ENCODE measurements at regions of chr5 and their contacts with region 1.

Region 1: GRCh38 chr5:148740966-148741742 is 85.3 kb upstream of the ADRB2 start:
- DNase-seq: peak; percentile 39
- H3K4me3 ChIP-seq: no peak overlapping the region
- H3K27ac ChIP-seq: no peak overlapping the region
- H3K4me1 ChIP-seq: no peaks in the 10 kb centered on the region
- H3K27me3 ChIP-seq: no peaks in the 10 kb centered on the region
- CTCF ChIP-seq: peak; percentile 72
- EP300 ChIP-seq: no peak
- RAD21 ChIP-seq: peak; percentile 80

Region 2: DNA sequence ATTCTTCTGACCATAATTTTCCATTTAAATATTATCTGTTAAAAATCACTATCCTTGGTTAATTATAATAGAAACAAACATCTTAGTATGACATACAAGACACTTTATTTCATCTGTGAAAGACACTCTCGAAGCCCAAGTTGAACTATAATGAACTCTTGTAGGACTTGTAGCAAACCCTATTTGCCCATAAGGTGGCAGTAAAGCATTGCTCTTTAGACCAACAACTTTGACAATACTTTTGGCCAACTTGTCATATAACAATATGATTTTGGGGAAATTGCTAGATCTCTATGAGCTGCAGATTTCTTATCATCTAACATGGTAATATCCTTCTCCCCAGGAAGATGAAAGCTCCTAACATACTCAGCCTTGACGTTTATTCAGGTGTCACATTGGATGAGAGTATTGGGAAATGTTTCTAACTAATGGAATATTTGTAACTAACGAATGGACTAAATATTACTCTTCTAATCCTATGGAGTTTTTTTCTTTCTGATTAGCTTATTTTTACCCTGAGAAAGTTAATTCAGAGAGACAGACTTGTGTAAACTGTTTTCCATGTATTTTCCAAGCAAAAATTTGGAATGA is 561.8 kb before region 1 on chr5:
- CTCF ChIA-PET with region 1: interaction called, 11 read pairs
- POLR2A ChIA-PET with region 1: no interaction called
- DNase-seq: peak; percentile 12
- H3K4me3 ChIP-seq: no peak overlapping the region
- H3K27ac ChIP-seq: no peak overlapping the region
- H3K4me1 ChIP-seq: no peaks in the 10 kb centered on the region
- H3K27me3 ChIP-seq: no peaks in the 10 kb centered on the region
- CTCF ChIP-seq: peak; percentile 82
- EP300 ChIP-seq: no peak
- RAD21 ChIP-seq: peak; percentile 91

Region 3: GRCh38 chr5:148659641-148660345 is 81.4 kb before region 1 on chr5:
- CTCF ChIA-PET with region 1: no interaction called
- POLR2A ChIA-PET with region 1: no interaction called
- DNase-seq: no peak
- H3K4me3 ChIP-seq: no peak overlapping the region
- H3K27ac ChIP-seq: no peak overlapping the region
- H3K4me1 ChIP-seq: peaks cover 0 to 9% of the 10 kb centered on the region in 2 experiments; a peak in 2 of 4 replicates
- H3K27me3 ChIP-seq: peaks cover 6% of the 10 kb centered on the region; the same call in 1 of the 2 replicates
- CTCF ChIP-seq: no peak
- EP300 ChIP-seq: no peak
- RAD21 ChIP-seq: no peak

Region 4: DNA sequence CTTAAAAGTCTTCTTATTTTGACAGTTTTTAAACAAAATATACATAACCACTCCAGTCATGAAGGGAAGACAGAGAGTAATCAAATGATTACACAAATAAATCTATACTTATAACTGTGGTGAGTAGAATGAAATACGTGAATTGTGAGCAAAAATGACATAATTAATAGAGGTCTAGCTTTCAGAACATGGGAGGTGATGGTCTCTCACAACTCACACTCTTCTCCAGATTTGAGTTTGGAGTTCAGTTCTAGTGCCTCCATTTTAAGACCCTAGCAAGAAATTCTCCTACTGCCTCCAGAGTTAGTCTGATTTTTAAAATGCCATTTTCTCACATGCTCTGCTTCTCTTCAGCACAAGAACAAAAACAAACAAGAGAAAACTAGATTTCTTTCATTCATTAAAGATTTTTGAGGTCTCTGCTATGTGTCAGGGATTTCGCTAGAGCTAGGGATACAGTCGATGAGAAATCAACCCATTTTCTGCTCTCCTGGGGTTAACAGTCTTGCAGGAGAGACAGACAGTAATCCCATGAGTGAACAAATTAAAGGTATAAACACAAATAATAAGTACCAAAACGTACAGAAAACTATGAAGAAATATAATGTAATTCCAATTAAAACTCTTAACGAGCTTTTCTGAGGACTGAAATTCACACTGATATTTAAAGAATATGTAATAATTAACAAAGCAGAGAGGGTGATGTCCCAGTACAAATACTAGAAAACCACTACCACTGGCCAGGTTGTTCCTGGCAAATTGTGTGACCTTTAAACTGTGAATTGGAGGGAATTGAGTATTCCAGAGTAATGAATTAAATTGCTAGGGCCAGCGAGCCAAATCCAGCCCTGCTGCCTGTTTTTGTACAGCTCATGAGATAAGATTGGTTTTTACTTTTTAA is 59.7 kb before region 1 on chr5:
- CTCF ChIA-PET with region 1: no interaction called
- POLR2A ChIA-PET with region 1: no interaction called
- DNase-seq: no peak
- H3K4me3 ChIP-seq: no peak overlapping the region
- H3K27ac ChIP-seq: no peak overlapping the region
- H3K4me1 ChIP-seq: peaks cover 0 to 4% of the 10 kb centered on the region in 2 experiments; a peak in 2 of 4 replicates
- H3K27me3 ChIP-seq: no peaks in the 10 kb centered on the region; the same call in 1 of the 2 replicates
- CTCF ChIP-seq: no peak
- EP300 ChIP-seq: no peak
- RAD21 ChIP-seq: no peak

Region 5: DNA sequence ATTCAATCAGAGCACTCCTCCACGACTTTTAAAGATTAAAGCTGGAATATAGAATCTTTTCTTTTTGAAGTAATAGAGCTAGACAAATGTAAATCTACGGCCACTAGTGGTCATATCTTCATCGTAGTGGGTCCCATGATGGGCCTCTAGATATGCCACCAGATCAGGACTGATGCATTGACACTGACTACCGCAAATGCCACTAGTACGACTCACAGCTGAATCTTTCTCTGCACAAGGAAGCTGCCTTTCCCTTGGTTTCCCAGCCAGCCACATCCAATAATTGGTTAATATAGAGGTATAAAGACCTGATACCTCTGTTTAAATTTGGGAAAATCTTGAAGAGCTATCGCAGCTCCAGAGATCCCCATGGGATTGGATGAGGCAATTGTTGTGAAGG is 47.5 kb after region 1 on chr5:
- CTCF ChIA-PET with region 1: interaction called, 10 read pairs
- POLR2A ChIA-PET with region 1: no interaction called
- DNase-seq: no peak
- H3K4me3 ChIP-seq: no peak overlapping the region
- H3K27ac ChIP-seq: no peak overlapping the region
- H3K4me1 ChIP-seq: peaks cover 0 to 15% of the 10 kb centered on the region in 2 experiments; a peak in 3 of 4 replicates
- H3K27me3 ChIP-seq: no peaks in the 10 kb centered on the region
- CTCF ChIP-seq: no peak
- EP300 ChIP-seq: no peak
- RAD21 ChIP-seq: no peak

Region 6: GRCh38 chr5:148998174-148998797 is 257.1 kb after region 1 on chr5:
- CTCF ChIA-PET with region 1: interaction called, 25 read pairs
- POLR2A ChIA-PET with region 1: no interaction called
- DNase-seq: peak; percentile 38
- H3K4me3 ChIP-seq: no peak overlapping the region
- H3K27ac ChIP-seq: no peak overlapping the region
- H3K4me1 ChIP-seq: peaks cover 0 to 10% of the 10 kb centered on the region in 2 experiments; a peak in 3 of 4 replicates
- H3K27me3 ChIP-seq: no peaks in the 10 kb centered on the region
- CTCF ChIP-seq: peak; percentile 81
- EP300 ChIP-seq: no peak
- RAD21 ChIP-seq: peak; percentile 78

Region 7: GRCh38 chr5:149046196-149046829 is 305.2 kb after region 1 on chr5:
- CTCF ChIA-PET with region 1: interaction called, 618 read pairs
- POLR2A ChIA-PET with region 1: no interaction called
- DNase-seq: no peak
- H3K4me3 ChIP-seq: no peak overlapping the region
- H3K27ac ChIP-seq: peak overlapping the region in 1 of 2 experiments; percentile 7; a peak in 1 of 4 replicates
- H3K4me1 ChIP-seq: peaks cover 0 to 4% of the 10 kb centered on the region in 2 experiments; a peak in 1 of 4 replicates
- H3K27me3 ChIP-seq: no peaks in the 10 kb centered on the region
- CTCF ChIP-seq: no peak
- EP300 ChIP-seq: no peak
- RAD21 ChIP-seq: no peak

Region 8: DNA sequence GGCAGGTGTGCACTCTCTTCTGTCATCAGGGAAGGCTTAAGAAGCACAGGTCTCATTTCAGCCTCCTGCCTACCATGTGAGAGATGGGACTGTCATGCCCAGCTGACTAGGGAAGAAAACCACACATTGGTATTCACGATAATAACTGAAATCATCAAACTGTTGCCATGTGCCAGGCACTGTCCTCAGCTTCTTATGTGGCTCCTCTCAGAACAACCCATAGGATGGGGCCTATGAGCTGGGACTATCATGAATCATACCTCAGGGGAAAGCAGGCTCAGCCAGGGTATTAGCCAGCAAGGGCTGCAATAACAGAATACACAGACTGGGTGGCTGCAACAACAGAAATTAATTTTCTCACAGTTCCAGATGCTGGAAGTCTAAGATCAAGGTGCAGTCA is 533.8 kb after region 1 on chr5:
- CTCF ChIA-PET with region 1: no interaction called
- POLR2A ChIA-PET with region 1: no interaction called
- DNase-seq: no peak
- H3K4me3 ChIP-seq: no peak overlapping the region
- H3K27ac ChIP-seq: no peak overlapping the region
- H3K4me1 ChIP-seq: peaks cover 0 to 4% of the 10 kb centered on the region in 2 experiments; a peak in 1 of 4 replicates
- H3K27me3 ChIP-seq: no peaks in the 10 kb centered on the region
- CTCF ChIP-seq: no peak
- EP300 ChIP-seq: no peak
- RAD21 ChIP-seq: no peak